ENCODE measurements at regions of chr12 and their contacts with region 1.

Region 1: DNA sequence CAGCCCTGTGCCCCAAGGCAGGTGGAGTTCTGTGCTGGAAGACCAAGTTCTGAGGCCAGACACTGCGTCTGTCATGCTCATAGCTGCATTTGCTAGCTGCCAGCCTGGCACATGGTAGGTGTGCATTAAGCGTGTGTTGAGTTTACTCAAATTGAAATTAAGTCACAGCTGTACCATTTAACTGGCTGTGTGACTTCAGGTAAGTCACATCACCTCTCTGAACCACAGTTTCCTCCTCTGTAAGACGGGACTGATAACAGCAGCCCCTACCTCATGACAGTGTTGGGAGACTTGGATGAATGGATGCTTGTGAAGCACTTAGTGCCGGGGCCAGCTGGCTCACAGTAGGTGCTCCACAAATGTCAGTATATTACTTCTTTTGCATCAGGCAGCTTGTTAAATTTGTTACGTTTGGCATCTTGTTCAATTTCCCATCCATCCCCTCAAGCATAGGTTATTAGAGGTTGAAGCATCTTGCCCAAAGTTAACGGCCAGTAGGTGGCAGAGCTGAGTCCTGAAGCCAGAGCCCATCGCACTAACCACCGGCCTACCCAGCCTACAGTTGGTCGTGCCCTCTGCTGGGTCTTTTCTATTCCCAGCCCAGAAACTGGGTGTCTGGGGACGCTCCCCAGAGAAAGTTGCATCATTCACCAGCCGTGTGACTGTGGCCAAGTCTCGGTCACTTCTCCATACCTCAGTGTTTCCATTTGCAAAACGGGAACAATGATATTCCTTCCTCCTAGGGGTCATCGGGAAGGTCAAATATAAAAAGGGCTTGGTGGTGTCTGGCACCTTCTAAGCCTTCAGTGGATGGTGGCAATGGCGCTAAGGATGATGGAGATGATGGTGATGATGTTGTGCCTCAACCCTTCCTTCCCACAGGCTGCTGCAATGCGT is 4.5 kb downstream of the DAO start:
- DNase-seq: peak; percentile 39 to 74 (median 62)
- ATAC-seq: peak; percentile 70
- H3K4me3 ChIP-seq: no peak overlapping the region
- H3K4me3 Mint-ChIP-seq: no peak overlapping the region
- H3K27ac ChIP-seq: no peak overlapping the region
- H3K27ac Mint-ChIP-seq: no peak overlapping the region
- H3K4me1 ChIP-seq: no peaks in the 10 kb centered on the region
- H3K4me1 Mint-ChIP-seq: no peaks in the 10 kb centered on the region
- H3K27me3 ChIP-seq: no peaks in the 10 kb centered on the region
- H3K27me3 Mint-ChIP-seq: peaks cover 4% of the 10 kb centered on the region
- CTCF ChIP-seq: peak; percentile 39

Region 2: GRCh38 chr12:108950991-108951739 is 66.8 kb after region 1 on chr12:
- CTCF ChIA-PET with region 1: interaction called, 3 read pairs
- POLR2A ChIA-PET with region 1: no interaction called
- intact Hi-C with region 1: loop called (anchors 2 kb)
- DNase-seq: peak; percentile 43 to 83 (median 69)
- ATAC-seq: peak; percentile 91
- H3K4me3 ChIP-seq: no peak overlapping the region
- H3K4me3 Mint-ChIP-seq: no peak overlapping the region
- H3K27ac ChIP-seq: no peak overlapping the region
- H3K27ac Mint-ChIP-seq: no peak overlapping the region
- H3K4me1 ChIP-seq: no peaks in the 10 kb centered on the region
- H3K4me1 Mint-ChIP-seq: peaks cover 6% of the 10 kb centered on the region
- H3K27me3 ChIP-seq: no peaks in the 10 kb centered on the region
- H3K27me3 Mint-ChIP-seq: peaks cover 16% of the 10 kb centered on the region
- CTCF ChIP-seq: peak; percentile 86

Region 3: DNA sequence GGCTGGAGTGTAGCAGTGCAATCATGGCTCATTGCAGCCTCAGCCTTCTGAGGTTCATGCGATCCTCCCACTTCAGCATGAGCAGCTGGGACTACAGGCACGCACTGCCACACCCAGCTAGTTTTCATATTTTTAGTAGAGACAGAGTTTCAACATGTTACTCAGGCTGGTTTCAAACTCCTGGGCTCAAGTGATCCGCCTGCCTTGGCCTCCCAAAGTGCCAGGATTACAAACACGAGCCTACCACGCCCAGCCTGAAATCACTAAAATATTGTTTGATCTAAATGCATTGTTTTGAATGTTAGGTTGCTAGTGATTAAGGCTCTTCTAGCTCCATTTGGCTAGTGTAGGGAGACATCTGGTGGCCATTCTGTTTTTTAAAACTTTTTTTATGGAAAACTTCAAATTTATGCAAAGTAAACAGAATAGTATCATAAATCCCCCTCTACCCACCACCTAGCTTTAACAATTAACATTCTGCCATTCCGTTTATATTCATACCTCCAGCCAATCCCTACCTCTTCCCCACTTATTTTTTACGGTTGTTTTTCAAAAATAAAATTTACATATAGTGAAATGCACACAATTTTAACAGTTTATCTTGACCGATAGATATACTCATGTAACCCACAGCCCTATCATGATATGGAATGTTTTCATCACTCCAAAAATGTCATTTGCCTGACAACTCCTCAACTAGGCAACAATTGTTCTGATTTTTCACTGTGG is 501.1 kb after region 1 on chr12:
- CTCF ChIA-PET with region 1: no interaction called
- POLR2A ChIA-PET with region 1: no interaction called
- intact Hi-C with region 1: loop called in 1 of 2 experiments (anchors 10 kb)
- DNase-seq: peak in 2 of 9 experiments; percentile 31
- ATAC-seq: no peak
- H3K4me3 ChIP-seq: no peak overlapping the region
- H3K4me3 Mint-ChIP-seq: no peak overlapping the region
- H3K27ac ChIP-seq: no peak overlapping the region
- H3K27ac Mint-ChIP-seq: no peak overlapping the region
- H3K4me1 ChIP-seq: no peaks in the 10 kb centered on the region
- H3K4me1 Mint-ChIP-seq: no peaks in the 10 kb centered on the region
- H3K27me3 ChIP-seq: peaks cover 0 to 4% of the 10 kb centered on the region in 2 experiments
- H3K27me3 Mint-ChIP-seq: peaks cover 24% of the 10 kb centered on the region
- CTCF ChIP-seq: no peak